GM12878 (cell line): ENCODE measurements at regions of chr6 and their contacts with region 1.

Region 1: DNA sequence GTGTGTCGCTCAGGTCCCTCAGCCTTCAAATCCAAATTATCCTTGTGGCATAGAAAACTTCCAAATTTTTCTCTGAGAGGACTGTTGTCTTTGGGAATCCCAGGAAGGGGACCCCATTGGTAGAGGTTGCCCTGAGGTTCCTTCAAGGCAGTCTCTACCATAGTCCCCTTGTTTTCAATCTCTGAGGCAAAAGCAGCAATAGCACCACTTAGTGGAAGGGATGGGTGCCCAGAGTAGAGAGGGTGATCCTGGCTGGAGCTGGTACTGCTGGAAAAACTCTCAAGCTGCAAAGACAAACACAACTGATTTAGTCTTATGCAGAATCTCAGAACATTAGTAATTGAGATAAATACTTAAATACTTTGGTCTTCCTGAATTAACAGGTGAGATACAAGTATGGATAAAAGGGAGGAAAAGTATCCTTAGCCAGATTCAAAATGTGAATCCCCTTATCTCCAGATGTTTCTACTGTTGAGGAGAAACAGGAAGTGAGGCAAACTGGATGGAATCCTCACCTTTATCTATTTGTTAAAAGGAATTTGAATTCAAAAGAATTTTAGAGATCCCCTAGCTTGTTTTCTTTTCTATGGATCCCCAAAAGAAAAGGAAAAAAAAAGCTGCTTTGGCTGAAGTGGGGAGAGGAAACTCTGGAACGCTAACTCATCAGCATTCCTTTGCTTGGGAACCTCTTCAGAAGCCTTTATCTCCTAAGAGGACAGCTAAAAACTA is 13.4 kb downstream of the ZNF318 start:
- DNase-seq: no peak
- ATAC-seq: peak; percentile 81
- H3K4me3 ChIP-seq: no peak overlapping the region
- H3K27ac ChIP-seq: no peak overlapping the region
- H3K4me1 ChIP-seq: peaks cover 2% of the 10 kb centered on the region
- H3K27me3 ChIP-seq: no peaks in the 10 kb centered on the region
- CTCF ChIP-seq: peak; percentile 26 to 55 (median 48); a peak in 4 of 6 replicates
- EP300 ChIP-seq: no peak
- POLR2A ChIP-seq: no peak
- RAD21 ChIP-seq: peak; percentile 52

Region 2: DNA sequence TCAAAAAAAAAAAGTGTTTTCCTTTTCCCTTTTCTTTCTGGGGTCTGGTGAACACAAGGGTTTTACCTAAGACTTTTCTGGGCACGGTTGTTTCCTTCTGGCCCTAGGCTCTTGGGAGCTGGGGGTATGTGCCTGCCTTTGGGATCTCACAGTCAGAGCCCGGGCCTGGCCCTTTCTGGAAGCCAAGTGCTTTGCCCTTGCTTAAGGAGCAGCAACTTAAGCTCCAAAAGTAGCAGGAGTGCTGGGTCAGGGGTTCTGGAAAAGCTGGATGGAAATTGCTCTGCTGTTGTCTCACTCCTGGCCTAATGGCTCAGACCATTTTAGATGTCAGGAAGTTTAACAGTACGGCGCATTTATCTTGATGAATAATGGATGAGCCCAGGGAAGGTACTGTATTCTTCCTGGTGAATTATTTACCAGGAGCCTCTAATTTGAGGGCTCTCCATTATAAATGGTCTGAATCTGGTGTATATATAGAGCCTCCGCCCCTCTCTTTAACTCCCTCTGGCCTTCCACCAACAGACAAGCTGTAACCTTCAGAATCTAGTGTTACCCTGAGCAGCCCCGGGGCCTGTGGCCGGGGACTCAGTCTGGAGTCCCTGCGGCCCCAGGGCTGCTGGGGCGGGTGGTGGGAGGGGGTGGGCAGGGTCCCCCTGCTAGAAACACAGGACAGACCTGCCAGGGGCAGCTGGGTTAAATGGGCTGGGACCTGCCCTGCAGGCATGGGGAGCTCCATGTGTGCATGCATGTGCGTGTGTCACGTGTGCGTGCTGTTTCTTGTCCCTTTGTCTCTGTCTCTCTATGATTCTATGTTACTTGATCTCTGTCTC is 242.4 kb before region 1 on chr6:
- CTCF ChIA-PET with region 1: no interaction called
- POLR2A ChIA-PET with region 1: no interaction called
- RAD21 ChIA-PET with region 1: no interaction called
- SMC1A ChIA-PET with region 1: no interaction called
- in situ Hi-C with region 1: no loop called
- intact Hi-C with region 1: no loop called
- DNase-seq: no peak
- ATAC-seq: no peak
- H3K4me3 ChIP-seq: no peak overlapping the region
- H3K27ac ChIP-seq: no peak overlapping the region
- H3K4me1 ChIP-seq: no peaks in the 10 kb centered on the region
- H3K27me3 ChIP-seq: no peaks in the 10 kb centered on the region
- CTCF ChIP-seq: no peak
- EP300 ChIP-seq: no peak
- POLR2A ChIP-seq: no peak
- RAD21 ChIP-seq: no peak

Region 3: DNA sequence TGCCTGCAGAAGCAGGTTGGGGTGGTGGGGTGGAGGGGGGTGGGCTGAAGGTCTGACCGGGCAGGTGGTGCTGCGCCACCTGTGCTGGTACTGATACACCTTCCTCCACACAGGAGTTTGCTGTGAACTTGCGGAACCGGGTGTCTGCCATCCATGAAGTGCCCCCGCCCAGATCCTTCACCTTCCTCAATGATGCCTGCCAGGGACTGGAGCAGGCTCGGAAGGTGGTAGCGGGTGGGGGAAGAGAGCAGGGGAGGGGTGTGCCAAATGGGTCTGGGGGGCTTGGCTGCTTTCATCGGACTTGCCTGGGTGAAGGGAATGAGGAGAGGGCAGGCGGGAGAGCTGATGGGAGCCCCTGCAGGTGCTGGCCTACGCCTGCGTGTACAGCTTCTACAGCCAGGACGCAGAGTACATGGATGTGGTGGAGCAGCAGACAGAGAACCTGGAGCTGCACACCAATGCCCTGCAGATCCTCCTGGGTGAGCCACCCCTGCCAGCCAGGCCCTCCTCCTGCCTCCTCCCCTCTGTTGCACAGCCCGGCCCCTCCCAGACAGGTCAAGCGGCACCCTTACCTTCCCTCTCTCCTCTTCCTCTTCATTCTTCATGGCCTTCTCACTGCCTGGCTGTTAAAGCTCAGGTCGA is 133.5 kb before region 1 on chr6:
- CTCF ChIA-PET with region 1: no interaction called
- POLR2A ChIA-PET with region 1: no interaction called
- RAD21 ChIA-PET with region 1: no interaction called
- SMC1A ChIA-PET with region 1: no interaction called
- in situ Hi-C with region 1: no loop called
- intact Hi-C with region 1: no loop called
- DNase-seq: no peak
- ATAC-seq: no peak
- H3K4me3 ChIP-seq: no peak overlapping the region
- H3K27ac ChIP-seq: no peak overlapping the region
- H3K4me1 ChIP-seq: peaks cover 19% of the 10 kb centered on the region
- H3K27me3 ChIP-seq: no peaks in the 10 kb centered on the region
- CTCF ChIP-seq: no peak
- EP300 ChIP-seq: no peak
- POLR2A ChIP-seq: peak; percentile 11; the same call in 1 of the 2 replicates
- RAD21 ChIP-seq: no peak

Region 4: DNA sequence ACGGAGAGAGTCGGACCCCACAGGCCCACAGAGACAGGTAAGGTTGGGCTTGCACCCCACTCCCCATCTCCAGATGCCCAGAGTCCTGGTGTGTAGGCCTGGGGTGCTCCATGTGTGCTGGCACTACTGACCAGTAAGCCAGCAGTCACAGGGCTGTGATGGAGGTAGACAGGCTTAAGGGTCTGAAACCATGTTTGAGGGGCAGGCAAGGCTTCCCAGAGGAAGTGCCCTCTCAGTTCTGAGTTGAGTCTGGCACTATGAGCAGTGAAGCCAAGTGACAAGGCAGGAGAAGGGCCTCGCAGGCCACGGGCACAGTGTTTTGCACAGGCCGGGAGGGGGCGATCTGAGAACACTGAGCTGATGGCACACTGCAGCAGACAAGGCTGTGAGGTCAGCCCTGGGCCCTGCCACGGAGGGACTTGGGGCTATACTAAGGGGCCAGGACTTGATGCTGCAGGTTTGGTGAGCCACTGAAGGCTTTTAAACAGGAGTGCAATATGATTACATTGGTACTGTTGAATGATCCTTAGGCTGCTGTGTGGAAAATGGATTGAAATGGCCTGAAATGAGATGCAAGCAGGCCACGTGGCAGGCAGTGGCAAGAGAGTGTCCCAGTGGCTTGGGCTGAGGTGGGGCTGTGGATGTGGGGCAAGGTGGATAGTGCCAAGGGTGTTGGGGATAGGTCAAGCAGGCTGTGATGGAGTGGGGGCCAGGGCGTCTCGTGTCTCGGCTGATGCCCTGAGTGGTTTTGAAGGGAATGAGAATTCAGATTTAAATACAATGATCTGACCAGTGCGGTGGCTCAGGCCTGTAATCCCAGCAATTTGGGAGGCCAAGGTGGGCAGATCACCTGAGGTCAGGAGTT is 92.5 kb before region 1 on chr6:
- CTCF ChIA-PET with region 1: interaction called, 28 read pairs
- POLR2A ChIA-PET with region 1: interaction called, 7 read pairs
- RAD21 ChIA-PET with region 1: interaction called, 17 read pairs
- SMC1A ChIA-PET with region 1: interaction called, 14 read pairs
- in situ Hi-C with region 1: no loop called
- intact Hi-C with region 1: loop called (anchors 1 kb)
- DNase-seq: peak; percentile 46
- ATAC-seq: peak; percentile 99
- H3K4me3 ChIP-seq: no peak overlapping the region
- H3K27ac ChIP-seq: no peak overlapping the region
- H3K4me1 ChIP-seq: peaks cover 2% of the 10 kb centered on the region; the same call in 1 of the 2 replicates
- H3K27me3 ChIP-seq: no peaks in the 10 kb centered on the region; a peak in 1 of 4 replicates
- CTCF ChIP-seq: peak; percentile 94 to 97 (median 97)
- EP300 ChIP-seq: no peak
- POLR2A ChIP-seq: no peak
- RAD21 ChIP-seq: peak; percentile 93

Region 5: GRCh38 chr6:43269273-43270007 is 86.6 kb before region 1 on chr6:
- CTCF ChIA-PET with region 1: interaction called, 28 read pairs
- POLR2A ChIA-PET with region 1: no interaction called
- RAD21 ChIA-PET with region 1: interaction called, 17 read pairs
- SMC1A ChIA-PET with region 1: interaction called, 14 read pairs
- in situ Hi-C with region 1: no loop called
- intact Hi-C with region 1: no loop called
- DNase-seq: no peak
- ATAC-seq: peak; percentile 52
- H3K4me3 ChIP-seq: no peak overlapping the region
- H3K27ac ChIP-seq: no peak overlapping the region
- H3K4me1 ChIP-seq: peaks cover 19% of the 10 kb centered on the region
- H3K27me3 ChIP-seq: no peaks in the 10 kb centered on the region
- CTCF ChIP-seq: no peak
- EP300 ChIP-seq: no peak
- POLR2A ChIP-seq: no peak
- RAD21 ChIP-seq: no peak

Region 6: DNA sequence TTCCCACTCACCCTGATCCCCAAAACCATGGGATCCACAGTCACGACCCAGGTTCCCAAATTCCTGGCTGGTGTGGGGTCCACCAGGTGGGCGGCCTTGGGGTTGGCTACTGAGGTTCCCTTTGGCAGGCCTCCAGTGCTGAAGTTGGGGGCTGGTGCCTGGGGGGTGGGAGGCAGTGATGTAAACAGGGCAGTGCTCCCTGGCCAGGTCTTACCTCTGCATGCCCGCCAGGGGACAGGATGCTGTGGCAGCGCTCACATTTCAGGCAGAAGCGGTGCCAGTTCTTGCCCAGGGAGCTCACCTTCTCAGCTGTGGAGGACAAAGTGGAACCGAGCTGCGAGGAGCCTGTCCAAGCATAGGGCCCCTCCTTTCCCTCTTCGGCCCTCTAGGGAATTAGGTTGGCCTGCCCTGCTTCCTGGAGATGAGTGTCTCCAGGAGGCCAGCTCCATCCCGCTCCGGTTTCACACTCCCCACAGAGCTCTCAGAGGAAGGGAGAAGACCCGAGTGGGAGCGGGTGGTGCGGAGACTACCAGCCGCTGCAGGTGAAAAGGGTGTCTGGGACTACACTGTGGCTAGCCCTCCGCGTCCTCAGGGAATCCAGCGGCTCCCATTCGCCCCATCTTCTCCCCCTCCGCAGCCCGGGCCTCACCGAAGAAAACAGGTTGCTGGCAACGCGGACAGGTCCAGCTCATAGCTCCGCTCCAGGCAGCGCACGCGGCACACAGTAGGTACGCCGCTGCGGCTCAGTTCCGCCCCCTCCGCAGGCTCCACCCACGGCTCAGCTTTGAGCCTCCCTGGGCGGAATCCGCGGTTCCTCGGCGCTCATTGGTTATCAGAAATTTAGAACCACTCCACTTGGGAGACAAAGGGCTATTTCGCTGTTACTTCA is 47.7 kb before region 1 on chr6 and contains the start of gene CRIP3:
- CTCF ChIA-PET with region 1: interaction called, 29 read pairs
- POLR2A ChIA-PET with region 1: interaction called, 3 read pairs
- RAD21 ChIA-PET with region 1: interaction called, 18 read pairs
- SMC1A ChIA-PET with region 1: interaction called, 22 read pairs
- in situ Hi-C with region 1: no loop called
- intact Hi-C with region 1: no loop called
- DNase-seq: no peak
- ATAC-seq: peak; percentile 92
- H3K4me3 ChIP-seq: peak within 1 kb of the TSS; percentile 57; the same call in 1 of the 2 replicates
- H3K27ac ChIP-seq: no peak within 1 kb of the TSS
- H3K4me1 ChIP-seq: peaks cover 8% of the 10 kb centered on the region
- H3K27me3 ChIP-seq: no peaks in the 10 kb centered on the region
- CTCF ChIP-seq: peak; percentile 49 to 79 (median 50)
- EP300 ChIP-seq: no peak
- POLR2A ChIP-seq: no peak
- RAD21 ChIP-seq: 0 out of 2 replicates have a peak, but pooled peaks have one; percentile 8
- polyA plus RNA-seq, gene CRIP3: 1.7 to 2.3 TPM

Region 7: DNA sequence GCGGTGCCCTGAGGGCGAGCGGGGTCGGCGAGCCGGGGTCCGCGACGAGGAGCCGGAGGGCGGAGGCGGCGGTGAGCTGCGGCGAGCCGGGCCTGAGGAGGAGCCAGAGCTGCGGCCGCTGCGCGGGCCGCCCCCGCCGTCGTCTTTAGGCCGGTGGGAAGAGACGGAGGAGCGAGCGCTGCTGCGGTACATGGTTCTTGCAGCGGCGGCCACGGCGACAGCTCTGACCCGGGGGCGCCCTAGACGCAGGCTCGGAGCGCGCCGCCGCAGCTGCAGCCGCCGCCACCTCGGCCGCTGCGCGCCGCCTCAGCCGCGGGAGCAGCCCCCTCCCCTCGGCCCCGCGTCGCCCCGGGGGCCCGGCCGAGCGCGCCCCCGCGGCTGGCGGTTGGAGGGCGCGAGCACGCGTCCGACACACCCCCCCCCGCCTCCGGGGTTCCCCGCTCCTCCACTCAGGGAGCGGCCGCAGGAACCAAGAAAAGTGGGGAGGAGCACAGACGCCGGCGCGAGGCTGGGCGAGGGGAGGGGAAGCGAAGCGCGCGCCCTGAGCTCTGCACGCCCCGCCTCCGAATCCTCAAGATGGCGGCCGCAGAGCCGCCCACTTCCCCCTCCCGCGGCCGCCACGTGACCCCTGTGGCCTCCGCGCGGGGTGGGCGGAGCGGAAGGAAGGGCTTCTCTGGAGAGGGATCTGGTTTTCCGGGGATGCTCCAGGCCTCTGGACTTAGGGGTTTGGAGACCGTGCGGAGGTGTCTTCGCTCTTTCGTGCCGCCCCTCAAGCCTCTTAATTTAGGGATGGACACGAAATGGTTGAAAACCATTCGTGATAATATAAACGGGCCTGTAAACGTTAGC is 13.4 kb after region 1 on chr6 and contains the start of gene ZNF318:
- CTCF ChIA-PET with region 1: interaction called, 5 read pairs
- POLR2A ChIA-PET with region 1: interaction called, 13 read pairs
- RAD21 ChIA-PET with region 1: interaction called, 311 read pairs
- SMC1A ChIA-PET with region 1: interaction called, 616 read pairs
- in situ Hi-C with region 1: no loop called
- intact Hi-C with region 1: no loop called
- DNase-seq: peak; percentile 82
- ATAC-seq: peak; percentile 83
- H3K4me3 ChIP-seq: peak within 1 kb of the TSS; percentile 84
- H3K27ac ChIP-seq: peak within 1 kb of the TSS; percentile 89
- H3K4me1 ChIP-seq: peaks cover 26% of the 10 kb centered on the region
- H3K27me3 ChIP-seq: no peaks in the 10 kb centered on the region
- CTCF ChIP-seq: no peak
- EP300 ChIP-seq: peak in 1 of 2 experiments; percentile 47; a peak in 2 of 4 replicates
- POLR2A ChIP-seq: peak; percentile 82
- RAD21 ChIP-seq: no peak
- polyA plus RNA-seq, gene ZNF318: 4.8 to 6.3 TPM

Region 8: GRCh38 chr6:43386492-43386891 is 30.5 kb after region 1 on chr6:
- CTCF ChIA-PET with region 1: interaction called, 15 read pairs
- POLR2A ChIA-PET with region 1: interaction called, 8 read pairs
- RAD21 ChIA-PET with region 1: interaction called, 311 read pairs
- SMC1A ChIA-PET with region 1: interaction called, 616 read pairs
- in situ Hi-C with region 1: no loop called
- intact Hi-C with region 1: no loop called
- DNase-seq: no peak
- ATAC-seq: no peak
- H3K4me3 ChIP-seq: no peak overlapping the region
- H3K27ac ChIP-seq: peak overlapping the region; percentile 86; the same call in 1 of the 2 replicates
- H3K4me1 ChIP-seq: peaks cover 41% of the 10 kb centered on the region
- H3K27me3 ChIP-seq: no peaks in the 10 kb centered on the region
- CTCF ChIP-seq: peak; percentile 20 to 47 (median 39); a peak in 4 of 6 replicates
- EP300 ChIP-seq: no peak
- POLR2A ChIP-seq: no peak
- RAD21 ChIP-seq: peak; percentile 54; the same call in 1 of the 2 replicates

Region 9: GRCh38 chr6:43391440-43392031 is 35.5 kb after region 1 on chr6:
- CTCF ChIA-PET with region 1: interaction called, 118 read pairs
- POLR2A ChIA-PET with region 1: interaction called, 8 read pairs
- RAD21 ChIA-PET with region 1: interaction called, 22 read pairs
- SMC1A ChIA-PET with region 1: interaction called, 616 read pairs
- in situ Hi-C with region 1: no loop called
- intact Hi-C with region 1: loop called (anchors 2 kb)
- DNase-seq: no peak
- ATAC-seq: peak; percentile 5
- H3K4me3 ChIP-seq: peak overlapping the region; percentile 52
- H3K27ac ChIP-seq: peak overlapping the region; percentile 59
- H3K4me1 ChIP-seq: peaks cover 6% of the 10 kb centered on the region; the same call in 1 of the 2 replicates
- H3K27me3 ChIP-seq: no peaks in the 10 kb centered on the region
- CTCF ChIP-seq: no peak
- EP300 ChIP-seq: no peak
- POLR2A ChIP-seq: no peak
- RAD21 ChIP-seq: no peak

Region 10: DNA sequence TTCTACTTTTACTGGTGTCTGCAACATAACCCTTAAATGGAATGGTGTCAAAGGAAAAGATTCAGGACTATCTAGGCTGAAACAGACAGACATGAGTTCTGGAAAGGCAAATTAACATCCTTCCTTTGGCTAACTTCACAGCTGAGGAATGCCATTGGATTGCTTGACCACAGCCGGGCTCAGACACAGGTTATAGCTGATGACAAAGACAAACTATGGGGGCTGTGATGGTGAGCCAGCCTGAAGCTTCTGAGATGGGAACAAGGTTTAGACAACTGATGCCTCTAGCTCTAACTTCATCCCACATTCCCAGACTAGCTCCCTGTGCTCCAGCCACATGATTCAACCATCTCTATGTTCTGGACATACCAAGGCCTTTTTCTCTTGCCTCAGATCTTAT is 176.2 kb after region 1 on chr6:
- CTCF ChIA-PET with region 1: no interaction called
- POLR2A ChIA-PET with region 1: no interaction called
- RAD21 ChIA-PET with region 1: no interaction called
- SMC1A ChIA-PET with region 1: no interaction called
- in situ Hi-C with region 1: no loop called
- intact Hi-C with region 1: no loop called
- DNase-seq: no peak
- ATAC-seq: no peak
- H3K4me3 ChIP-seq: no peak overlapping the region
- H3K27ac ChIP-seq: no peak overlapping the region
- H3K4me1 ChIP-seq: no peaks in the 10 kb centered on the region
- H3K27me3 ChIP-seq: no peaks in the 10 kb centered on the region
- CTCF ChIP-seq: no peak
- EP300 ChIP-seq: no peak
- POLR2A ChIP-seq: no peak
- RAD21 ChIP-seq: no peak